HCT116 (cell line): ENCODE measurements at regions of chr5 and their contacts with region 1.

Region 1: GRCh38 chr5:181191529-181192394 is 13.2 kb downstream of the TRIM7 start:
- DNase-seq: peak; percentile 89
- ATAC-seq: peak; percentile 68
- H3K4me3 ChIP-seq: peak overlapping the region; percentile 74 to 92
- H3K27ac ChIP-seq: peak overlapping the region; percentile 76
- H3K4me1 ChIP-seq: peaks cover 18 to 48% of the 10 kb centered on the region in 2 experiments
- H3K27me3 ChIP-seq: no peaks in the 10 kb centered on the region
- CTCF ChIP-seq: no peak
- POLR2A ChIP-seq: no peak
- RAD21 ChIP-seq: no peak

Region 2: DNA sequence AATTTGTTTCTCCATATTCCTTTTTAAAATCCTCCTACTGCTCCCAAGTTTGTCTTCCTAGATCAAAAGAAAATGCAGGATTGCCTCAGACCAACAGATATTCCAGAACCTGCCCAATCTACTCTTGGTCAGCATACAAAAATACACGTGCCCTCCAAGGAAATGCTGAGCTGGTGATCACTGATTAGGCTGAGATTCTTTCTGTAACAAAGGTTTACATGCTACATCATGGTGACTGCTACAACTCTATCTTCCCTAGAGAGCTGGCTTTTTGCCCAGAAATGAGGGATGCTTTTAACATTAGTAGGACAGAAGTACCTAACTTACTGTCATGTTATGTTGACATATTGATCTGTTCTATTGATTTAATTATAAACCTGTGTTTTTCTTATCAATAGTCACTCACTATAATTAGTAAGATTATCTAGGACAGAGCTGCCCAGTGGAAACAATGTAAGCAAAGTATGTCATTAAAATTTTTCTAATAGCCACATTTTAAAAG is 487.3 kb before region 1 on chr5:
- CTCF ChIA-PET with region 1: no interaction called
- POLR2A ChIA-PET with region 1: no interaction called
- RAD21 ChIA-PET with region 1: no interaction called
- intact Hi-C with region 1: no loop called
- DNase-seq: peak; percentile 8
- ATAC-seq: no peak
- H3K4me3 ChIP-seq: no peak overlapping the region
- H3K27ac ChIP-seq: no peak overlapping the region
- H3K4me1 ChIP-seq: 0 out of 4 replicates have a peak, but pooled peaks cover 2 to 5% of the 10 kb centered on the region in 2 experiments
- H3K27me3 ChIP-seq: no peaks in the 10 kb centered on the region
- CTCF ChIP-seq: no peak
- POLR2A ChIP-seq: no peak
- RAD21 ChIP-seq: no peak

Region 3: GRCh38 chr5:181217803-181218062 is 26.0 kb after region 1 on chr5:
- CTCF ChIA-PET with region 1: interaction called, 3 read pairs
- POLR2A ChIA-PET with region 1: interaction called, 3 read pairs
- RAD21 ChIA-PET with region 1: no interaction called
- intact Hi-C with region 1: loop called (anchors 1 kb)
- DNase-seq: no peak
- ATAC-seq: no peak
- H3K4me3 ChIP-seq: no peak overlapping the region
- H3K27ac ChIP-seq: peak overlapping the region; percentile 19; the same call in 1 of the 2 replicates
- H3K4me1 ChIP-seq: peaks cover 12 to 48% of the 10 kb centered on the region in 2 experiments
- H3K27me3 ChIP-seq: no peaks in the 10 kb centered on the region
- CTCF ChIP-seq: no peak
- POLR2A ChIP-seq: no peak
- RAD21 ChIP-seq: no peak